Activated CD8-positive, alpha-beta T cell treated with anti-CD3 and anti-CD28 coated beads for 36 hours (primary cell): ENCODE measurements at regions of chr12 and their contacts with region 1.

Region 1: GRCh38 chr12:56104109-56104814 is at the start of gene PA2G4:
- DNase-seq: peak; percentile 100
- ATAC-seq: peak; percentile 94
- H3K4me3 Mint-ChIP-seq: peak within 1 kb of the TSS; percentile 95
- H3K27ac Mint-ChIP-seq: peak within 1 kb of the TSS; percentile 99
- H3K4me1 Mint-ChIP-seq: peaks cover 47% of the 10 kb centered on the region
- H3K27me3 Mint-ChIP-seq: no peaks in the 10 kb centered on the region
- CTCF ChIP-seq: no peak
- total RNA-seq, gene PA2G4: 447 to 455 TPM

Region 2: GRCh38 chr12:56041552-56042429 is 62.5 kb before region 1 on chr12 and contains the start of gene RPS26:
- CTCF ChIA-PET with region 1: interaction called, 53 read pairs
- POLR2A ChIA-PET with region 1: interaction called, 30 read pairs
- intact Hi-C with region 1: loop called (anchors 2 kb)
- DNase-seq: peak; percentile 97
- ATAC-seq: peak; percentile 90
- H3K4me3 Mint-ChIP-seq: peak within 1 kb of the TSS; percentile 84
- H3K27ac Mint-ChIP-seq: peak within 1 kb of the TSS; percentile 92
- H3K4me1 Mint-ChIP-seq: peaks cover 52% of the 10 kb centered on the region
- H3K27me3 Mint-ChIP-seq: no peaks in the 10 kb centered on the region
- CTCF ChIP-seq: peak; percentile 57
- total RNA-seq, gene RPS26: 29.7 to 29.8 TPM

Region 3: GRCh38 chr12:56078990-56079664 is 25.1 kb before region 1 on chr12:
- CTCF ChIA-PET with region 1: interaction called, 7 read pairs
- POLR2A ChIA-PET with region 1: interaction called, 21 read pairs
- intact Hi-C with region 1: no loop called
- DNase-seq: peak; percentile 63
- ATAC-seq: peak; percentile 60
- H3K4me3 Mint-ChIP-seq: peak overlapping the region; percentile 72
- H3K27ac Mint-ChIP-seq: no peak overlapping the region
- H3K4me1 Mint-ChIP-seq: peaks cover 14% of the 10 kb centered on the region
- H3K27me3 Mint-ChIP-seq: peaks cover 8% of the 10 kb centered on the region
- CTCF ChIP-seq: peak; percentile 83

Region 4: DNA sequence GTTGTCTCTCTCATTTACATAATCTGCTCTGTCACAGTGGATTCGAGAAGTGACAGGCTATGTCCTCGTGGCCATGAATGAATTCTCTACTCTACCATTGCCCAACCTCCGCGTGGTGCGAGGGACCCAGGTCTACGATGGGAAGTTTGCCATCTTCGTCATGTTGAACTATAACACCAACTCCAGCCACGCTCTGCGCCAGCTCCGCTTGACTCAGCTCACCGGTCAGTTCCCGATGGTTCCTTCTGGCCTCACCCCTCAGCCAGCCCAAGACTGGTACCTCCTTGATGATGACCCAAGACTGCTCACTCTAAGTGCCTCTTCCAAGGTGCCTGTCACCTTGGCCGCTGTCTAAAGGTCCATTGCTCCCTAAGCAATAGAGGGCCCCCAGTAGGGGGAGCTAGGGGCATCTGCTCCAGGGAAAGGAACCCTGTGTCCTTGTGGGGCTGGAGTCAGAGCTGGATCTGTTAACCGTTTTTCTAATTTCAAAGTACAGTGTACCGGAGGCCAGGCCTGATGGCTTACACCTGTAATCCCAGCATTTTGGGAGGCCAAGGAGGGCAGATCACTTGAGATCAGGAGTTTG is 19.2 kb before region 1 on chr12:
- CTCF ChIA-PET with region 1: interaction called, 13 read pairs
- POLR2A ChIA-PET with region 1: interaction called, 21 read pairs
- intact Hi-C with region 1: no loop called
- DNase-seq: peak; percentile 63
- ATAC-seq: peak; percentile 71
- H3K4me3 Mint-ChIP-seq: no peak overlapping the region
- H3K27ac Mint-ChIP-seq: no peak overlapping the region
- H3K4me1 Mint-ChIP-seq: peaks cover 9% of the 10 kb centered on the region
- H3K27me3 Mint-ChIP-seq: peaks cover 8% of the 10 kb centered on the region
- CTCF ChIP-seq: peak; percentile 65

Region 5: DNA sequence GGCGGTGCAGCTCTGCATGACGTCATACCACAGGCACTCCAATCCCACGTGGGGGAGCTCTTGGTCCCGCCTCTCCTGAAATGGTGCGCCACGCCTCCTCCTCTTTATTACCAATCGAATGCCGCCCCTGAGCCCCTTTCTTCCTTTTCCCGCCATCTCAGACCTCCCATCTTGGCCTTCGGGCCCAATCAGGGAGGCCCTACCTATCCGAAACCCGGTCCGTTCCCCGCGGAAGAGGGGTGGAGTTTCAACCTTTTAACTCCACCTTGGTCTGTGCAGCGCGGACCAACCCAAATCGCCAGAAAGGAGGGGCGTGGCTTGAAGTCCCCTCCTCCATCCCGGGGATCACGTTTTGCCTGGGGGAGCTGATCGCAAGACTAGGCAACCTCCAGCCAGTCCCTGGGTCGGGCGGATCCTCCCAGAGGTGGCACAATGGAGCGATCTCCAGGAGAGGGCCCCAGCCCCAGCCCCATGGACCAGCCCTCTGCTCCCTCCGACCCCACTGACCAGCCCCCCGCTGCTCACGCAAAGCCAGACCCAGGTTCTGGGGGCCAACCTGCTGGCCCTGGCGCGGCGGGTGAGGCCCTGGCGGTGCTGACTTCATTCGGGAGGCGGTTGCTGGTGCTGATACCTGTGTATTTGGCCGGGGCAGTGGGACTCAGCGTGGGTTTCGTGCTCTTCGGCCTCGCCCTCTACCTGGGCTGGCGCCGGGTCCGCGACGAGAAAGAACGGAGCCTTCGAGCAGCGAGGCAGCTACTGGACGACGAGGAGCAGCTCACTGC is 23.8 kb after region 1 on chr12 and contains the start of gene ESYT1:
- CTCF ChIA-PET with region 1: interaction called, 7 read pairs
- POLR2A ChIA-PET with region 1: interaction called, 21 read pairs
- intact Hi-C with region 1: no loop called
- DNase-seq: peak; percentile 99
- ATAC-seq: peak; percentile 92
- H3K4me3 Mint-ChIP-seq: peak within 1 kb of the TSS; percentile 84
- H3K27ac Mint-ChIP-seq: peak within 1 kb of the TSS; percentile 93
- H3K4me1 Mint-ChIP-seq: peaks cover 53% of the 10 kb centered on the region
- H3K27me3 Mint-ChIP-seq: no peaks in the 10 kb centered on the region
- CTCF ChIP-seq: no peak
- total RNA-seq, gene ESYT1: 154 to 160 TPM

Region 6: GRCh38 chr12:56152318-56153033 is 48.2 kb after region 1 on chr12 and contains the start of gene MYL6B:
- CTCF ChIA-PET with region 1: no interaction called
- POLR2A ChIA-PET with region 1: interaction called, 9 read pairs
- intact Hi-C with region 1: loop called (anchors 1 kb)
- DNase-seq: peak; percentile 98
- ATAC-seq: peak; percentile 88
- H3K4me3 Mint-ChIP-seq: peak within 1 kb of the TSS; percentile 92
- H3K27ac Mint-ChIP-seq: peak within 1 kb of the TSS; percentile 100
- H3K4me1 Mint-ChIP-seq: peaks cover 36% of the 10 kb centered on the region
- H3K27me3 Mint-ChIP-seq: no peaks in the 10 kb centered on the region
- CTCF ChIP-seq: no peak
- total RNA-seq, gene MYL6B: 60.3 to 66.9 TPM